Cardiac septum (tissue), 1 donor: ENCODE measurements at regions of chr16 and their contacts with region 1.

Region 1: GRCh38 chr16:65117811-65118448 is 3.9 kb downstream of the CDH11 start:
- DNase-seq: no peak

Region 2: GRCh38 chr16:64478252-64478906 is 639.6 kb before region 1 on chr16:
- intact Hi-C with region 1: loop called (anchors 10 kb)
- DNase-seq: no peak

Region 3: DNA sequence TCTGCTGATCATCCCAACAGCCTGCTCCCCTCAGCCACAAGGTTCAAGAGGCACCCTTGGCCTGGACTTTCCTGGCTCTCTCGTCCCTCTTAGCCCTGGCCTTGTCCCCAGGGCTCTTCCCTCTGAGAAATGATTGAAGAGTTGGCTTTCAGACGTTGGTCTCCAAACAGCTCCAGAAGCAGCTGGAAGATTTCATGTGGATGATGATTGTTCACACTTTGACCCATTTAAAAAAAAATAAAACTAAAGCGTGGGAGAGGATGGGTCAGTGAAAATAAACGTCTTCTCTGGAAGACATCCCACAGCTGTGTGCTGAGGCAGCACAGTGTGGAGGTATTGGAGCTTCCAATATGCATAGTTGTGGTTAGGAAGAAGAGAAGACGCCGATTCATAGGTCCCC is 58.7 kb after region 1 on chr16:
- intact Hi-C with region 1: no loop called
- DNase-seq: no peak

Region 4: GRCh38 chr16:65249768-65250167 is 131.8 kb after region 1 on chr16:
- intact Hi-C with region 1: loop called (anchors 10 kb)
- DNase-seq: peak; percentile 88

Region 5: GRCh38 chr16:66036793-66037715 is 919.1 kb after region 1 on chr16:
- intact Hi-C with region 1: loop called (anchors 10 kb)
- DNase-seq: no peak

Region 6: DNA sequence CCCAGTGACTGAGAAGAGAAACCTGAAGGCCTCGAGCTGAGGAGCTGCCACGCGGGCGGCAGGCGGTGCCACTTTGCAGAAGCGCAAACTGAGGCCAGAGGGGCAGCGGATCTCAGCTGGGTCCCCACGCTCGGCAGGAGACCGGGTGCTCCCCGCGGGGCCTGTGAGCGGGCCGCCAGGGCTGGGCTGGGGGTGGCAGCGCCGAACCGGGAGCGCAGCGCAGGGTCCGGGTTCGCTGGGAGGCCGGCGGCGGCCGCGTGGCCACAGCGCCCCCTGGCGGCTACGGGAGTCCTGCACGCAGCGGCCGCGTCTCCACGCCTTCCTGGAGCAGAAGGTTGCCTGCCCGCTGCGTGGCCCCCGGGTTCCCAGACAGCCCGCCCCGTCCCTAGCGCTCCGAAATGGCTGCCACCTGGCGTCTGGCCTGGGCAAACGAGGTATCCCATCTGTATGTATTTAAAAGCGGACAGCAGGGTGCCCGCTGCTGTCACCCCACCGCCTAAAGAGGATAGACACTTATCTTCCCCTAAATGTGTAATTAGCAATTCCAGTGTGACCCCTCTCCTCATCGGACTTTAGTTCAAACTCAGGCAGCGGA is 1152.5 kb after region 1 on chr16:
- intact Hi-C with region 1: loop called (anchors 5 kb)
- DNase-seq: peak; percentile 91